ENCODE measurements at regions of chr12 and their contacts with region 1.

Region 1: GRCh38 chr12:46372544-46373110 is at the start of gene SLC38A2:
- DNase-seq: peak in 1 of 2 experiments; percentile 98
- H3K4me3 ChIP-seq: peak within 1 kb of the TSS; percentile 87 to 99 (median 88)
- H3K27ac ChIP-seq: peak within 1 kb of the TSS; percentile 93
- H3K4me1 ChIP-seq: peaks cover 7 to 12% (median 8%) of the 10 kb centered on the region in 4 experiments; a peak in 6 of 7 replicates
- H3K27me3 ChIP-seq: no peaks in the 10 kb centered on the region
- CTCF ChIP-seq: no peak
- EP300 ChIP-seq: no peak
- POLR2A ChIP-seq: peak; percentile 98 to 99
- RAD21 ChIP-seq: no peak; a peak in 1 of 4 replicates
- total RNA-seq, gene SLC38A2: 620 and 684 TPM in 2 replicates

Region 2: GRCh38 chr12:46300910-46301309 is 71.7 kb before region 1 on chr12:
- CTCF ChIA-PET with region 1: no interaction called
- POLR2A ChIA-PET with region 1: no interaction called
- DNase-seq: no peak
- H3K4me3 ChIP-seq: no peak overlapping the region
- H3K27ac ChIP-seq: no peak overlapping the region
- H3K4me1 ChIP-seq: peaks cover 0 to 18% (median 5%) of the 10 kb centered on the region in 4 experiments; a peak in 2 of 7 replicates
- H3K27me3 ChIP-seq: no peaks in the 10 kb centered on the region
- CTCF ChIP-seq: no peak
- EP300 ChIP-seq: no peak
- POLR2A ChIP-seq: no peak
- RAD21 ChIP-seq: no peak

Region 3: DNA sequence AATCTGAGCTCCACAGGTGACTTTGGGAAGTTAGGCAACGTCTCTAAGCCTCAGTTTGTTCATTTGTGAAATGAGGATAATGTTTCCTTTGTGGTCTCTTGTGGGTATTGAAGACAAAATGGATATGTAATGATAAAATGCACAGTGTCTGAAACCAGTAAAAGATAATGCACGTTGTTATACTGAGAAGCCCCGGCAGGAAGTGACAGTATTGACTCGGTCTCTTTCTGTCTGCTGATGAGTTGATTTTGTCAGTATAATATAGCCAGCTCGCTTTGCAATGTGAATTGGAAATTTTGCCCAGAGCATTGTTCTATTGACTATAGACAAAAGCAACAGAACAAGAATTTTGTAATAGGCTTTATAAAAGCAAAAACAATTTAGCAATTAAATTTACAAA is 54.6 kb before region 1 on chr12:
- CTCF ChIA-PET with region 1: no interaction called
- POLR2A ChIA-PET with region 1: no interaction called
- DNase-seq: no peak
- H3K4me3 ChIP-seq: no peak overlapping the region
- H3K27ac ChIP-seq: no peak overlapping the region
- H3K4me1 ChIP-seq: peaks cover 2 to 11% (median 3%) of the 10 kb centered on the region in 4 experiments; a peak in 6 of 7 replicates
- H3K27me3 ChIP-seq: no peaks in the 10 kb centered on the region
- CTCF ChIP-seq: no peak
- EP300 ChIP-seq: no peak
- POLR2A ChIP-seq: no peak
- RAD21 ChIP-seq: no peak

Region 4: GRCh38 chr12:46357438-46358324 is 14.9 kb before region 1 on chr12:
- CTCF ChIA-PET with region 1: interaction called, 4 read pairs
- POLR2A ChIA-PET with region 1: interaction called, 263 read pairs
- DNase-seq: no peak
- H3K4me3 ChIP-seq: no peak overlapping the region
- H3K27ac ChIP-seq: no peak overlapping the region; the same call in 1 of the 2 replicates
- H3K4me1 ChIP-seq: no peaks in the 10 kb centered on the region
- H3K27me3 ChIP-seq: no peaks in the 10 kb centered on the region
- CTCF ChIP-seq: no peak
- EP300 ChIP-seq: no peak
- POLR2A ChIP-seq: peak; percentile 51 to 83
- RAD21 ChIP-seq: no peak

Region 5: GRCh38 chr12:46382964-46383653 is 10.5 kb after region 1 on chr12:
- CTCF ChIA-PET with region 1: no interaction called
- POLR2A ChIA-PET with region 1: interaction called, 233 read pairs
- DNase-seq: peak in 1 of 2 experiments; percentile 93
- H3K4me3 ChIP-seq: peak overlapping the region; percentile 79 to 90 (median 83)
- H3K27ac ChIP-seq: peak overlapping the region; percentile 94
- H3K4me1 ChIP-seq: peaks cover 13 to 31% (median 22%) of the 10 kb centered on the region in 4 experiments
- H3K27me3 ChIP-seq: no peaks in the 10 kb centered on the region
- CTCF ChIP-seq: no peak
- EP300 ChIP-seq: 0 out of 3 replicates have a peak, but pooled peaks of 1 of the 2 experiments have one; percentile 18
- POLR2A ChIP-seq: peak; percentile 57 to 72; a peak in 2 of 3 replicates
- RAD21 ChIP-seq: no peak

Region 6: DNA sequence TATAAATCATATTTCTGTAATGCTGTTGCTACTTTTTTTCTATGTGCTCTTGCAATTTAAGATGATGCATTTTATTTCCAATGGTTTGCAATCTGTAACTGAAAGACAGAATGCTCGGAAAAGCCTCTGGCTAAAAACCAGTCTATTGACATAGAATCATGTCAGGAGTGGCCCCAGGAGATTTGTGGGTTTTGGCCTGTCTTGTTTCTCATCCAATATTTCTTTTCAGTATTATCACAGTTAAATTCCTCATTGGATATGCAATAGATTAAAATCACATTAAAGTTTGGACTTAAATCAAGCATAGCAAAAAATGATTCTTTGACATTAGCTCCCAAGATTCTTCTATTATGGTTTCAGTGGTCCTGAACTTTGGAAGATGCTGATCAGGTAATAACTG is 19.0 kb after region 1 on chr12:
- CTCF ChIA-PET with region 1: interaction called, 3 read pairs
- POLR2A ChIA-PET with region 1: interaction called, 233 read pairs
- DNase-seq: no peak
- H3K4me3 ChIP-seq: no peak overlapping the region
- H3K27ac ChIP-seq: no peak overlapping the region
- H3K4me1 ChIP-seq: peaks cover 6 to 30% (median 19%) of the 10 kb centered on the region in 4 experiments
- H3K27me3 ChIP-seq: no peaks in the 10 kb centered on the region
- CTCF ChIP-seq: no peak
- EP300 ChIP-seq: no peak
- POLR2A ChIP-seq: no peak
- RAD21 ChIP-seq: no peak

Region 7: DNA sequence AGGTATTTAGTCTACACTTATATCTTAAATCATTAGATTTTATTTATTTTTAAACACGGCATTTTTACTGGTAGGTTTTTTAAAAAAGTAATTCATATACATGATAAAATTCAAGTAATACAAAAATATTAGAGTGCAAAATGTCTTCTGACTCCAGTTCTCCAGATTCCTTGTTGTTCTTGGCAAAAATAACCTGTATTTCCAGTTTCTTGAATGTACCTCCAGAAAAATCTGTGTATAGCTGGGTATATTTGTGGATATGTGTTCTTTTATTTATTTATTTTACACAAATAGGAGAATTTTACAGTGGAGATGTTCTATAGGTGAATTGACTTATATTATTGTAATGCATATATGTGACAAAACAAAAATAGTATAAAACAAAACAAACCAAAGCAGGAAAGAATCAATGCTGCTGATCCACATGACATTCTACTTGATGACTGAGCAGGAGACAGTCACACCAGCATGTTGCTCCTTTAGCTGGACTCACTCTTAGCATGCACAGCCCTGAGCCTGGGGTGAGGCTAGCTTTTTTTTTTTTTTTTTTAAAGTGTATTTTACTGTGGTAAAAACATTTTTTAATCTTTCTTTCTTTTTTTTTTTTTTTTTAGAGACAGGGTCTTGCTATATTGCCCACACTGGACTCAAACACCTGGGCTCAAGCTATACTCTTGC is 42.1 kb after region 1 on chr12:
- CTCF ChIA-PET with region 1: no interaction called
- POLR2A ChIA-PET with region 1: no interaction called
- DNase-seq: no peak
- H3K4me3 ChIP-seq: no peak overlapping the region
- H3K27ac ChIP-seq: no peak overlapping the region
- H3K4me1 ChIP-seq: no peaks in the 10 kb centered on the region
- H3K27me3 ChIP-seq: no peaks in the 10 kb centered on the region
- CTCF ChIP-seq: no peak
- EP300 ChIP-seq: no peak
- POLR2A ChIP-seq: no peak
- RAD21 ChIP-seq: no peak

Region 8: GRCh38 chr12:46430340-46430948 is 57.8 kb after region 1 on chr12:
- CTCF ChIA-PET with region 1: no interaction called
- POLR2A ChIA-PET with region 1: interaction called, 11 read pairs
- DNase-seq: no peak
- H3K4me3 ChIP-seq: no peak overlapping the region
- H3K27ac ChIP-seq: no peak overlapping the region
- H3K4me1 ChIP-seq: peaks cover 0 to 4% (median 0%) of the 10 kb centered on the region in 4 experiments; a peak in 1 of 7 replicates
- H3K27me3 ChIP-seq: no peaks in the 10 kb centered on the region
- CTCF ChIP-seq: no peak
- EP300 ChIP-seq: no peak
- POLR2A ChIP-seq: no peak
- RAD21 ChIP-seq: no peak

Region 9: DNA sequence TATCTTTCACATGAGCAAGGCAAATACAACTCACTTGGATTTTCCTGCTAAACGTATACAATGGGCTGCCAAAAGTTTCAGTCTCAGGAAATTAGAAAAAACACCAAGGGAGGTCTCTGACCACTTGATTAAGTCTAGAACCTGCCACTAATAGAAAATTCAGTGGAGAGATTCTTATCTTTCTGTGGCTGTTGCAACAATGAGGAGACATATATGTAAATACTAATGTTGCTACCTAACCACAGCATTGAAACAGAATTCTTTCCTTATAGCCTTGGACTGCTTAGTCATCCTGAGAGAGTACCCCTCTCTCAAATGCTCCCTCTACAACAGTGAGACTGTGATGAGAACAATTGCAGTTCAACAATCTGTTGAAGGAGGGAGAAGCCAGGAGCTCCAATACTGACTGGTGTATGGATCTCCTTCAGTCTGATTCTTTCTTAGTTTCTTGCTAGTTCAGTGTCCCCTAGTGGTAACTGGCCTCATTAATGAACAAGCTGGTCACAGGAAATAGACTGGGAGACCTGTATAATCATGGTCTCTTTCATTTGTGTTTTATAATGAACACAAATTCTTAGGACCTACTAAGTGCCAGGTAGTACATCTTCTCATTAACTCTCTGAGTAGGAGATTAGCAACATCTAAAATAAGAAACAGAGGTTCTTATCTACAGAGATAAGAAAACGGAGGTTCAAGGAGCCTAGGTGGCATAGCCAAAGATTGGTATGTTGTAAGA is 288.7 kb after region 1 on chr12:
- CTCF ChIA-PET with region 1: interaction called, 4 read pairs
- POLR2A ChIA-PET with region 1: interaction called, 13 read pairs
- DNase-seq: no peak
- H3K4me3 ChIP-seq: no peak overlapping the region
- H3K27ac ChIP-seq: no peak overlapping the region
- H3K4me1 ChIP-seq: no peaks in the 10 kb centered on the region; a peak in 1 of 7 replicates
- H3K27me3 ChIP-seq: no peaks in the 10 kb centered on the region
- CTCF ChIP-seq: peak in 2 of 3 experiments; percentile 65 to 80; a peak in 3 of 4 replicates
- EP300 ChIP-seq: no peak
- POLR2A ChIP-seq: no peak
- RAD21 ChIP-seq: peak; percentile 84

Region 10: GRCh38 chr12:46667551-46667950 is 294.9 kb after region 1 on chr12:
- CTCF ChIA-PET with region 1: interaction called, 3 read pairs
- POLR2A ChIA-PET with region 1: interaction called, 18 read pairs
- DNase-seq: no peak
- H3K4me3 ChIP-seq: no peak overlapping the region
- H3K27ac ChIP-seq: no peak overlapping the region
- H3K4me1 ChIP-seq: peaks cover 0 to 10% (median 1%) of the 10 kb centered on the region in 4 experiments; a peak in 3 of 7 replicates
- H3K27me3 ChIP-seq: no peaks in the 10 kb centered on the region
- CTCF ChIP-seq: no peak
- EP300 ChIP-seq: no peak
- POLR2A ChIP-seq: no peak
- RAD21 ChIP-seq: no peak

Measured in H1 (cell line).